Right ventricle myocardium inferior (tissue), 1 donor: ENCODE measurements at regions of chr9 and their contacts with region 1.

Region 1: DNA sequence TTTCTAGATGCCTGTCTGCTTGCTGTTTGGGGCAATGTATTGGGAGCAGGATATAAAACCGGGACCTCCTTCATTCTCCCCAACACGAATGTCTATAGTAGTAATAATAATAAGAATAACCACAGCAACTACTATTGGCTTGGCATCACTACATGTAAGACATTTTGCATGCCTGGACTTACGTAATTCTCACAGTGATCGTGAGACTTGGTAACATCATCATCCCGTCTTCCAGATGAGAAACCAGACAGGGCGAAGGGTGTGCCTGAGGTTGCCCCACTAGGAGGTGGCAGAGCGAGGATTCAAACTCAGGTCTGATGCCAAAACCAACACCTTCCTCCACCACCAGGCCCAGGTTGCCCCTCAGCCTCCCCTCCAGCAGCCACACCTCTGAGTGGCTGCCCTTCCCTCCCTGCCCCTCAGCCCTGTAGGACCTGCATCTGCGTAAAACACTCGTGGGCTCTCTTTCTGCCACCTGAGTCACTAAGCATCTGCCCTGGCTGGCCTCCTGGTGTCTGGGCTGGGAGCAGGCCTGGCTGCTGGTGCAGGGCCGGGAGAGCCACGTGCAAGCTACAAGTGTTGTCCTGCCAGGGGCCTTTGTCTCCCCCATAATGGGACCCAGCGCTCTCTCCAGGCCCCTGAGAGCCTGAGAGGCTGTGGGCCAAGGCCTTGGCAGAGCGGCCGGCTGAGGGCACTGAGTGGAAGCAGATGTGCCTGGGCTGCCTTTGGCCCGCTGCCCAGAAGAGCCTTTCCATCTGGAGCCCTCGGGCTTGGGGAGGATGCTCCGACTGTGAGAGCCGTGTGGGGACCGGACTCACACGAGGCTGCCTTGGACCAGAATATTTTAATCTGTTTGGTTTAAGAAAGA is 185.3 kb downstream of the RGS3 start:
- DNase-seq: peak; percentile 85
- ATAC-seq: peak; percentile 90

Region 2: DNA sequence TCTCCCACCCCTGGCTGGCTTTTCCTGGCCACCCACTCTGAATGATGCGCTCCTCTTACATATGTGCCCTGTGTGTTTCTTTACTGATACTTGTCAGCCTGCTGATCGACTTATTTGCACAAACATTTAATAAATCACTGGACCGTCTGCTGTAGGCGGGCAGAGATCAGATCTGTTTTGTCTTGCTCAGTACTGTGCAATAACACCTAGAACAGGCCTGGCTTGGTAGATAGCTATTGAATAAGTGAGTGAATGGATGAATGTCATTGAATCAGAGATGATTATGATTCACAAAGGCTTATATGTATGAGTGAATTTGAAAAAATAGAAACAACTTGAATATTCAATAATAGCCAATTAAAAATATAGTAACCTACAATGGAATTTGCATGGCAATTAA is 20.2 kb before region 1 on chr9:
- intact Hi-C with region 1: loop called (anchors 2 kb)
- DNase-seq: no peak
- ATAC-seq: no peak